ENCODE measurements at regions of chr1 and their contacts with region 1.

Region 1: GRCh38 chr1:248471154-248471553 is 2.0 kb upstream of the OR2T3 start:
- DNase-seq: no peak
- ATAC-seq: no peak
- H3K4me3 ChIP-seq: no peak overlapping the region
- H3K27ac ChIP-seq: no peak overlapping the region
- H3K4me1 ChIP-seq: no peaks in the 10 kb centered on the region
- H3K27me3 ChIP-seq: no peaks in the 10 kb centered on the region
- CTCF ChIP-seq: no peak
- EP300 ChIP-seq: no peak
- POLR2A ChIP-seq: no peak
- RAD21 ChIP-seq: no peak

Region 2: DNA sequence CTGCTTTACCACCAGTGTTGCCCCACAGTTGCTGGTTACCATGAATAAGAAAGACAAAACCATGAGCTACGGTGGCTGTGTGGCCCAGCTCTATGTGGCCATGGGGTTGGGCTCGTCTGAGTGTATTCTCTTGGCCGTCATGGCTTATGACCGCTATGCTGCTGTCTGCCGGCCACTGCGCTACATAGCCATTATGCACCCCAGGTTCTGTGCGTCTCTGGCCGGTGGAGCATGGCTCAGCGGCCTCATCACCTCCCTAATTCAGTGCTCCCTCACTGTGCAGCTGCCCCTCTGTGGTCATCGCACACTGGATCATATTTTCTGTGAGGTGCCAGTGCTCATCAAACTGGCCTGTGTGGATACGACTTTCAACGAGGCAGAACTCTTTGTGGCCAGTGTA is 50.7 kb after region 1 on chr1:
- CTCF ChIA-PET with region 1: no interaction called
- POLR2A ChIA-PET with region 1: no interaction called
- in situ Hi-C with region 1: no loop called
- intact Hi-C with region 1: loop called (anchors 10 kb)
- DNase-seq: no peak
- ATAC-seq: no peak
- H3K4me3 ChIP-seq: no peak overlapping the region
- H3K27ac ChIP-seq: no peak overlapping the region
- H3K4me1 ChIP-seq: no peaks in the 10 kb centered on the region
- H3K27me3 ChIP-seq: no peaks in the 10 kb centered on the region
- CTCF ChIP-seq: no peak
- EP300 ChIP-seq: no peak
- POLR2A ChIP-seq: no peak
- RAD21 ChIP-seq: no peak

Region 3: DNA sequence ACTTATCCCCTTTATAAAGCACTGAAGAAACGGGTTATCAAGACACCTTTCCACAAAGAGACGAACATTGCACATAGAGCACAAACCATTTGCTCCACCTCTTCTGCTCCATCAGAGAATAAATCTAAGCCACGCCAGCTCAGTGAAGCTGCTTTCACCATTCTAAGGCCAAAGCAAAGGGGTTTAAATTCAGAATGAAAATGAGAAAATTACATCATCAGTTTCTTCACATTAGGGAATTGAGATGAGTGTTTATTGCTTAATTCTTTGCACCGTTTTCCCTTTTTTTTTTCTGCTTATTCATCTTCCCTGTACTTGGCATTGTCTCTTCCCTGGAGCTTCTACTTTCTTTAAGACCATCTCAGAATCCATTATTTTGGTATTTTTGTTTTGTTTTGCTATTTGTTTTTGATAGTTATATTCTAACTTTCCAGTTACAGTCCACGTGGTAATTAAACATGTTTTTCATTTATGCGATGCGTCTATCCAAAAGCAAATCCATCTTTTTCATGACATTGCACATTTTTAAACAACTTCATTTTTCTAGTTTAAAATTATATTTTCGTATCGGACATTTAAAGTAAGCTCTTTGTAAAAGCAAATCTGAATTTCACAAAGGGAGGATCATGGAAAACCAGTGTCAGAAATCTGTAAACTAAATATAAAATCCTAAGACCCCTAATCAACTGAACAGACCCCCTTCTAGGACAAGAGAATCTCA is 105.3 kb after region 1 on chr1:
- CTCF ChIA-PET with region 1: no interaction called
- POLR2A ChIA-PET with region 1: no interaction called
- in situ Hi-C with region 1: loop called (anchors 5 kb)
- intact Hi-C with region 1: no loop called
- DNase-seq: no peak
- ATAC-seq: no peak
- H3K4me3 ChIP-seq: no peak overlapping the region
- H3K27ac ChIP-seq: no peak overlapping the region
- H3K4me1 ChIP-seq: no peaks in the 10 kb centered on the region
- H3K27me3 ChIP-seq: no peaks in the 10 kb centered on the region
- CTCF ChIP-seq: no peak
- EP300 ChIP-seq: no peak
- POLR2A ChIP-seq: no peak
- RAD21 ChIP-seq: no peak